ENCODE measurements at regions of chr5 and their contacts with region 1.

Region 1: GRCh38 chr5:76402886-76403765 is at the start of gene IQGAP2:
- DNase-seq: peak; percentile 73 to 96 (median 92)
- H3K4me3 ChIP-seq: peak within 1 kb of the TSS; percentile 82
- H3K4me3 Mint-ChIP-seq: peak within 1 kb of the TSS; percentile 92 to 99 (median 96)
- H3K27ac ChIP-seq: peak within 1 kb of the TSS; percentile 94
- H3K27ac Mint-ChIP-seq: peak within 1 kb of the TSS; percentile 95 to 99 (median 98)
- H3K4me1 ChIP-seq: peaks cover 45% of the 10 kb centered on the region
- H3K4me1 Mint-ChIP-seq: peaks cover 55 to 65% (median 60%) of the 10 kb centered on the region in 3 donors
- H3K27me3 ChIP-seq: no peaks in the 10 kb centered on the region
- H3K27me3 Mint-ChIP-seq: peaks cover 0 to 3% of the 10 kb centered on the region in 2 donors
- total RNA-seq, gene IQGAP2: 51.4 to 62.5 TPM

Region 2: DNA sequence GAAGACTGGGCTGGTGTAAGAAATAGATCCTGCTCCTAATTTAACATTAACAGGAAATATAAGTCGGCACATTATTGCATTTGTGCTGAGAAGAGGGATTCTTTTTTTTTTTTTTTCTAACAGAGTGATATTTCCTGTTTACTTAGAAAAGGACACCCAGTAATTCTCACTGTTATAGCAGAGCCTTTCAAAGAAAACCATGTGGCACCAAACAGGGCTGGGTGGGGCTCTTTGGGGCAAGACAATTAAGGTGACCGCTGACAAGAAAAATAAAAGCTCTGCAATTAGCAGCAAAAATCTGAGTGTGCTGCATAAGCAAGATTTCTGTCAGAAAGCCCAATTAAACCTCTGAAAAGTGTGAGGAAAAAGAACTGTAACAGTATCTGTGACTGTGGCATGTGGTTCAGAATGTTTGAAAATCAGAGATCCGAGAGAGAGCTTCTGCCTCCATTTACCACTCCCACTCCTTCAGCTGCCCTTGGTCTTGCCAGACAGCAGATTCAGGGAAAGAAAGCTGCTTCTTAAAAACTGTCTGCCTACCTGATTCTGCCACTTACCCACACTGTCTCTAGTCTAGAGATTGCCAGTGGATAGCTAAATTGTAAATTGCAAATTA is 77.1 kb before region 1 on chr5:
- CTCF ChIA-PET with region 1: interaction called, 27 read pairs
- POLR2A ChIA-PET with region 1: interaction called, 15 read pairs
- DNase-seq: peak; percentile 10 to 66 (median 37)
- H3K4me3 ChIP-seq: peak overlapping the region; percentile 33
- H3K4me3 Mint-ChIP-seq: peak overlapping the region; percentile 48 to 83 (median 81)
- H3K27ac ChIP-seq: peak overlapping the region; percentile 13
- H3K27ac Mint-ChIP-seq: peak overlapping the region; percentile 92 to 99 (median 96)
- H3K4me1 ChIP-seq: peaks cover 64% of the 10 kb centered on the region
- H3K4me1 Mint-ChIP-seq: peaks cover 71 to 83% (median 83%) of the 10 kb centered on the region in 3 donors
- H3K27me3 ChIP-seq: no peaks in the 10 kb centered on the region
- H3K27me3 Mint-ChIP-seq: no peaks in the 10 kb centered on the region

Region 3: GRCh38 chr5:76345582-76345981 is 57.5 kb before region 1 on chr5:
- CTCF ChIA-PET with region 1: interaction called, 10 read pairs
- POLR2A ChIA-PET with region 1: no interaction called
- DNase-seq: no peak
- H3K4me3 ChIP-seq: no peak overlapping the region
- H3K4me3 Mint-ChIP-seq: no peak overlapping the region
- H3K27ac ChIP-seq: no peak overlapping the region
- H3K27ac Mint-ChIP-seq: no peak overlapping the region
- H3K4me1 ChIP-seq: no peaks in the 10 kb centered on the region
- H3K4me1 Mint-ChIP-seq: peaks cover 12 to 15% (median 15%) of the 10 kb centered on the region in 3 donors
- H3K27me3 ChIP-seq: no peaks in the 10 kb centered on the region
- H3K27me3 Mint-ChIP-seq: peaks cover 0 to 1% of the 10 kb centered on the region in 2 donors

Region 4: GRCh38 chr5:76379316-76379715 is 23.8 kb before region 1 on chr5:
- CTCF ChIA-PET with region 1: interaction called, 11 read pairs
- POLR2A ChIA-PET with region 1: interaction called, 6 read pairs
- DNase-seq: no peak
- H3K4me3 ChIP-seq: no peak overlapping the region
- H3K4me3 Mint-ChIP-seq: peak overlapping the region in 3 of 7 donors; percentile 0 to 70 (median 45)
- H3K27ac ChIP-seq: no peak overlapping the region
- H3K27ac Mint-ChIP-seq: peak overlapping the region in 6 of 8 donors; percentile 3 to 78 (median 26)
- H3K4me1 ChIP-seq: peaks cover 24% of the 10 kb centered on the region
- H3K4me1 Mint-ChIP-seq: peaks cover 44 to 56% (median 54%) of the 10 kb centered on the region in 3 donors
- H3K27me3 ChIP-seq: no peaks in the 10 kb centered on the region
- H3K27me3 Mint-ChIP-seq: no peaks in the 10 kb centered on the region

Region 5: GRCh38 chr5:76387845-76388635 is 15.1 kb before region 1 on chr5:
- CTCF ChIA-PET with region 1: interaction called, 17 read pairs
- POLR2A ChIA-PET with region 1: interaction called, 6 read pairs
- DNase-seq: no peak
- H3K4me3 ChIP-seq: no peak overlapping the region
- H3K4me3 Mint-ChIP-seq: no peak overlapping the region
- H3K27ac ChIP-seq: no peak overlapping the region
- H3K27ac Mint-ChIP-seq: peak overlapping the region in 2 of 8 donors; percentile 22 to 29
- H3K4me1 ChIP-seq: peaks cover 56% of the 10 kb centered on the region
- H3K4me1 Mint-ChIP-seq: peaks cover 59 to 77% (median 75%) of the 10 kb centered on the region in 3 donors
- H3K27me3 ChIP-seq: no peaks in the 10 kb centered on the region
- H3K27me3 Mint-ChIP-seq: peaks cover 0 to 1% of the 10 kb centered on the region in 2 donors

Region 6: GRCh38 chr5:76544268-76544926 is 141.3 kb after region 1 on chr5:
- CTCF ChIA-PET with region 1: interaction called, 70 read pairs
- POLR2A ChIA-PET with region 1: interaction called, 58 read pairs
- DNase-seq: peak; percentile 26 to 69 (median 36)
- H3K4me3 ChIP-seq: peak overlapping the region; percentile 37
- H3K4me3 Mint-ChIP-seq: peak overlapping the region; percentile 63 to 90 (median 80)
- H3K27ac ChIP-seq: peak overlapping the region; percentile 87
- H3K27ac Mint-ChIP-seq: peak overlapping the region; percentile 90 to 99 (median 98)
- H3K4me1 ChIP-seq: peaks cover 81% of the 10 kb centered on the region
- H3K4me1 Mint-ChIP-seq: peaks cover 87 to 98% (median 96%) of the 10 kb centered on the region in 3 donors
- H3K27me3 ChIP-seq: no peaks in the 10 kb centered on the region
- H3K27me3 Mint-ChIP-seq: no peaks in the 10 kb centered on the region

Region 7: GRCh38 chr5:76582230-76583162 is 179.4 kb after region 1 on chr5:
- CTCF ChIA-PET with region 1: interaction called, 46 read pairs
- POLR2A ChIA-PET with region 1: interaction called, 3 read pairs
- DNase-seq: no peak
- H3K4me3 ChIP-seq: no peak overlapping the region
- H3K4me3 Mint-ChIP-seq: no peak overlapping the region
- H3K27ac ChIP-seq: no peak overlapping the region
- H3K27ac Mint-ChIP-seq: peak overlapping the region in 4 of 8 donors; percentile 34 to 78 (median 64)
- H3K4me1 ChIP-seq: peaks cover 5% of the 10 kb centered on the region
- H3K4me1 Mint-ChIP-seq: peaks cover 22 to 39% (median 37%) of the 10 kb centered on the region in 3 donors
- H3K27me3 ChIP-seq: no peaks in the 10 kb centered on the region
- H3K27me3 Mint-ChIP-seq: no peaks in the 10 kb centered on the region